ENCODE measurements at regions of chr10 and their contacts with region 1.

Region 1: GRCh38 chr10:18214691-18215563 is 74.7 kb downstream of the CACNB2 start:
- DNase-seq: peak; percentile 60
- H3K4me3 ChIP-seq: no peak overlapping the region
- H3K27ac ChIP-seq: no peak overlapping the region
- H3K4me1 ChIP-seq: no peaks in the 10 kb centered on the region
- H3K27me3 ChIP-seq: no peaks in the 10 kb centered on the region
- CTCF ChIP-seq: peak; percentile 67

Region 2: DNA sequence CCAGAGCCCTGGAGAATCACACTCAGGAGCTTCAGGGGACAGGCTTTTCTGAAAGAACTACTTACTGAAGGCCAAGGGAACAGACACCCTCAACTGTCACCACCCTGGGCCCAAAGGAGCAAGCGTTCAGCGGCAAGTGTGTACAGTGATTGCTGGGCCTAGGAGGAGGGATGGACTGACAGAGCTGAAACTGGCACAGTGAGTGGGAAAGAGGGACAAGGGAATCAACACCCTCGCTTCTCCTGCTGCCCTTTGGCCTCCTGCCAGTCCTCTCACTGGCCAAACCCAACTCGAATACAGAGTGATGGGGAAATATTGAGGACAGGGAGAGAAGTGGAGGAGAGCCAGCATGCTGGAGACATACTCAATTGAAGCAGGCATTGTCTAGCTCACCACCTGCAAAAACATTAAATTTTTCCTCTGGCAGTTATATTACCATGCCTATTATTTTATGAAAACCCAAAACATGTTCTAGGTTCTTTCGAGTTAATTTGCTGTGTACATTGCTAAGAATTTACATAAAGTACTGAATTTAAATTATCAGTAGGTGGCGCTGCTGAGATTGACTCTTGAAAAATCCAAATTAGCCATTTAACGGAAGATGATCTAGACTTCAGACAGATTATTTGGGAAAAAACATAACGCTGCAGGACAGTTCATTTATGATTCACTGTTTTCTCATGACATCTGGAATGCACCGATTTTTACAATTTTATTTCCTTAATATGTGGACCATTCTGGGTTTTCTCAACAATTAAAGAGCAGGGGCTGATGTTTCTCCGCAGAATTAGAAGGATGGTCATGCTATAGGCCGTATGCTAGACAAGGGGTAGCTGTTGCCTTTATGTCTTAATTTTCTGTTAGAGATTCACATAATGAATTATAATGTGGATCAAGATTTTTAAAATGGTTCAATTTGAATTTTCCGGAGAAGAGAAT is 477.6 kb before region 1 on chr10:
- intact Hi-C with region 1: loop called (anchors 10 kb)
- DNase-seq: no peak
- H3K4me3 ChIP-seq: no peak overlapping the region
- H3K27ac ChIP-seq: no peak overlapping the region
- H3K4me1 ChIP-seq: no peaks in the 10 kb centered on the region
- H3K27me3 ChIP-seq: no peaks in the 10 kb centered on the region
- CTCF ChIP-seq: peak; percentile 76

Region 3: DNA sequence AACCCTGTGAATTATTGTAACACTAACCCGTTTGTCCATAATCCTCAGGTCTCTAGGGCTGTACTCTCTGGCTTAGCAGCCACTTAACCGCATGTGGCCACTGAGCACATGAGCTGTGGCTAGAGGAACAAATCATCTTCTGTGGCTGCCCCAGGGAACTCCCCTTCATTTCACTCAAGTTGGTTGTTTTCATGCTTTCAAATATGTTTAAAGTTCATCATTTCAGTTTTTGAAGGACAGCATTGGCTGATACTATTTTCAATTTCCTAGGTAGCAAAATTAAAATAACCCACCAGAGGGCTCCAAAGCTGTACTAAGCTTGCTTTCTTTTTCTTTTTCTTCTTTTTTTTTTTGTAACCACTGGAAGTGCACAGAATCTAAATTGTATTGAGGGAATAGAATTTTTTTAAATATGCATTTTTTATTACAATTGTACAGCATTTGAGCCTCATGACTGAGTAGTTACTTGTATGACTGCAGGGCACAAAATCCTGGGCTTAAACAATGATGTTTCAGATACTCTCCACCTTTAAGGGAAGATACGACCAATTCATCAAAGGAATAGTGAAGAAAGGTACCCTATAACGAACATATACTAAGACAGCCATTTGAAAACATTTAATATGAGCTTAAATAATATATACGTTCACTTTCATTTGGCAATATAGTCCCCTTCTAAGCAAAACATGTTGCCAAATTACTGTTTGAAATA is 367.2 kb before region 1 on chr10:
- intact Hi-C with region 1: loop called (anchors 5 kb)
- DNase-seq: no peak
- H3K4me3 ChIP-seq: no peak overlapping the region
- H3K27ac ChIP-seq: no peak overlapping the region
- H3K4me1 ChIP-seq: no peaks in the 10 kb centered on the region
- H3K27me3 ChIP-seq: no peaks in the 10 kb centered on the region
- CTCF ChIP-seq: no peak

Region 4: DNA sequence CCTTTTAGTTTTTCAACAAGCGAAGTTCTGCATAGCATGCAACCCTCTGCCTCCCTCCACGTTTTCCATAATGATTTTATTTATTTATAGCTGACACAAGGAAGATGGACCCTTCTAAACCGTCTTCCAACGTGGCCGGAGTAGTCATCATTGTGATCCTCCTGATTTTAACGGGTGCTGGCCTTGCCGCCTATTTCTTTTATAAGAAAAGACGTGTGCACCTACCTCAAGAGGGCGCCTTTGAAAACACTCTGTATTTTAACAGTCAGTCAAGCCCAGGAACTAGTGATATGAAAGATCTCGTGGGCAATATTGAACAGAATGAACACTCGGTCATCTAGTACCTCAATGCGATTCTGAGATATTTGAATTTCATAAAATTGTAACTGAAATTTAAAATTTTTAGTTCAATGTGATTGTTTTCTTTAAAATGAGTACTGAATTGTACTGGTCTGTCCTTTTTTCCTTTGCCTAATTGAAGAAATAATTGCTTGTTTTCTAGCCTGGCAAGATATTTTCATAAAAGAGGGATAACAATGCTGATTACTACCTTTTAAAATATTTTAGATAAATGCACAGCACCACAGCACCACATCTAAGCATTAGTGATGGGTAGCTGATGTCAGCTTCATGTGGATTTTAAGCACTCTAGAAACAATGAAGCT is 304.7 kb before region 1 on chr10:
- intact Hi-C with region 1: loop called (anchors 5 kb)
- DNase-seq: peak; percentile 61
- H3K4me3 ChIP-seq: no peak overlapping the region
- H3K27ac ChIP-seq: no peak overlapping the region
- H3K4me1 ChIP-seq: no peaks in the 10 kb centered on the region
- H3K27me3 ChIP-seq: no peaks in the 10 kb centered on the region
- CTCF ChIP-seq: peak; percentile 45

Region 5: GRCh38 chr10:17989908-17990767 is 224.8 kb before region 1 on chr10:
- intact Hi-C with region 1: no loop called
- DNase-seq: no peak
- H3K4me3 ChIP-seq: no peak overlapping the region
- H3K27ac ChIP-seq: no peak overlapping the region
- H3K4me1 ChIP-seq: no peaks in the 10 kb centered on the region
- H3K27me3 ChIP-seq: no peaks in the 10 kb centered on the region
- CTCF ChIP-seq: no peak

Measured in colonic mucosa (tissue), 4 donors.